Posterior cingulate gyrus (tissue), 11 donors: ENCODE measurements at regions of chr3 and their contacts with region 1.

Region 1: GRCh38 chr3:185659942-185660921 is 74.1 kb downstream of the SENP2 start:
- DNase-seq: peak; percentile 50 to 97 (median 78)

Region 2: GRCh38 chr3:185623939-185624665 is 36.1 kb before region 1 on chr3:
- intact Hi-C with region 1: no loop called
- DNase-seq: no peak

Region 3: GRCh38 chr3:185764163-185764979 is 104.1 kb after region 1 on chr3:
- intact Hi-C with region 1: loop called (anchors 1 kb)
- DNase-seq: no peak

Region 4: GRCh38 chr3:185937689-185938463 is 277.6 kb after region 1 on chr3 and contains the start of gene TRA2B:
- intact Hi-C with region 1: loop called (anchors 10 kb)
- DNase-seq: peak; percentile 99 to 100 (median 99)